ENCODE measurements at regions of chr1 and their contacts with region 1.

Region 1: GRCh38 chr1:111769517-111770146 is 13.9 kb downstream of the DDX20 start:
- DNase-seq: peak; percentile 12 to 45
- ATAC-seq: peak; percentile 98
- H3K4me3 ChIP-seq: peak overlapping the region in 1 of 4 donors; percentile 1
- H3K27ac ChIP-seq: peak overlapping the region; percentile 69 to 81 (median 72)
- H3K4me1 ChIP-seq: peaks cover 4 to 7% of the 10 kb centered on the region in 2 donors
- H3K27me3 ChIP-seq: no peaks in the 10 kb centered on the region
- CTCF ChIP-seq: peak; percentile 86 to 95 (median 87)
- POLR2A ChIP-seq: no peak

Region 2: DNA sequence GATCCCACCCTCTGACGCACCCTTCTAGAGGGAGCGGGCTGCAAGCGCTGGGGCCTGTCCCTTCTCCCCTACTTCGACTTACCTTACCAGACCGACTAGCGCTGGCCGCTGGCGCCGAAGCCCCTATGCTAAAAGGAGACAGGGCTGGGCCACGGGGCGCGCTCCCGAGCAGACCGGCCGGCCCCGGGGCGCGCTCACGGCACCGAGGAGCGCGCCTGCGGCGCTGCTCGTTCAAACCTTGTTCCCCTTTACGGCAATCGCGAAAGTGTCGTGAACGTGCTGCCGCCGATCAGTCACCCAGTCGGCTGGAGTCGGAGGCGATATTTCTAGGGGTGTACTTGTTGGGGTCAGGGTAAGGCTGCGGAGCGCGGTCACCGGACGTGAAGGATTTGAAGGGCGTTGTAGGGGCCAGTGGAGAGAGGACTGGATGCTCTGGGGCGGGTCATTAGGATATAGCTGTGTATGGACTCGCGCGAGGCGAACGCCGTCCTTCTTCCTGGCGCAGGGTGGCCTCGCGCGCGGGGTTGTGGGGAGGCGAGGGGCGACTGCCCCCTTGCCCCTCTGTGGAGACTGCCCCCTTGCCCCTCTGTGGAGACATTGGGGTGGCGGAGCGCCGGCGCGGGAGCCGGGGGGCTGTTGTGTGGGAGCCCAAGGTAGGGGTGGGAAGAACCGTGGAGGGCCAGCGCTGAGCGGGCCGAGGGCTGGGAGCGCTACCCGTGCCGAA is 629.5 kb before region 1 on chr1 and contains the starts of genes CEPT1 and DRAM2:
- in situ Hi-C with region 1: loop called in 2 of 4 experiments (anchors 25 kb)
- intact Hi-C with region 1: loop called (anchors 10 kb)
- DNase-seq: peak; percentile 94
- ATAC-seq: peak; percentile 93 to 96
- H3K4me3 ChIP-seq: peak within 1 kb of the TSS; percentile 92 to 99 (median 96)
- H3K27ac ChIP-seq: peak within 1 kb of the TSS; percentile 94 to 98 (median 96)
- H3K4me1 ChIP-seq: peaks cover 28 to 42% of the 10 kb centered on the region in 2 donors
- H3K27me3 ChIP-seq: no peaks in the 10 kb centered on the region
- CTCF ChIP-seq: no peak
- POLR2A ChIP-seq: peak; percentile 58 to 69
- total RNA-seq, gene CEPT1: 8.2 to 14.8 (median 10.6) TPM
- total RNA-seq, gene DRAM2: 28.9 to 47.1 (median 36.7) TPM

Region 3: GRCh38 chr1:111222308-111223125 is 547.1 kb before region 1 on chr1:
- in situ Hi-C with region 1: loop called in 2 of 4 experiments (anchors 10 kb)
- intact Hi-C with region 1: loop called (anchors 1 kb)
- DNase-seq: peak in 1 of 2 donors; percentile 41
- ATAC-seq: peak in 1 of 2 donors; percentile 62
- H3K4me3 ChIP-seq: no peak overlapping the region
- H3K27ac ChIP-seq: no peak overlapping the region
- H3K4me1 ChIP-seq: no peaks in the 10 kb centered on the region
- H3K27me3 ChIP-seq: no peaks in the 10 kb centered on the region
- CTCF ChIP-seq: peak; percentile 50 to 79 (median 74)
- POLR2A ChIP-seq: no peak

Region 4: GRCh38 chr1:111481387-111482221 is 288.0 kb before region 1 on chr1:
- in situ Hi-C with region 1: loop called (anchors 5 to 10 kb)
- intact Hi-C with region 1: loop called (anchors 2 kb)
- DNase-seq: peak; percentile 71 to 75
- ATAC-seq: peak; percentile 94 to 95
- H3K4me3 ChIP-seq: no peak overlapping the region
- H3K27ac ChIP-seq: peak overlapping the region; percentile 15 to 52 (median 27)
- H3K4me1 ChIP-seq: peaks cover 8 to 12% of the 10 kb centered on the region in 2 donors
- H3K27me3 ChIP-seq: no peaks in the 10 kb centered on the region
- CTCF ChIP-seq: peak; percentile 58 to 72 (median 68)
- POLR2A ChIP-seq: no peak

Region 5: DNA sequence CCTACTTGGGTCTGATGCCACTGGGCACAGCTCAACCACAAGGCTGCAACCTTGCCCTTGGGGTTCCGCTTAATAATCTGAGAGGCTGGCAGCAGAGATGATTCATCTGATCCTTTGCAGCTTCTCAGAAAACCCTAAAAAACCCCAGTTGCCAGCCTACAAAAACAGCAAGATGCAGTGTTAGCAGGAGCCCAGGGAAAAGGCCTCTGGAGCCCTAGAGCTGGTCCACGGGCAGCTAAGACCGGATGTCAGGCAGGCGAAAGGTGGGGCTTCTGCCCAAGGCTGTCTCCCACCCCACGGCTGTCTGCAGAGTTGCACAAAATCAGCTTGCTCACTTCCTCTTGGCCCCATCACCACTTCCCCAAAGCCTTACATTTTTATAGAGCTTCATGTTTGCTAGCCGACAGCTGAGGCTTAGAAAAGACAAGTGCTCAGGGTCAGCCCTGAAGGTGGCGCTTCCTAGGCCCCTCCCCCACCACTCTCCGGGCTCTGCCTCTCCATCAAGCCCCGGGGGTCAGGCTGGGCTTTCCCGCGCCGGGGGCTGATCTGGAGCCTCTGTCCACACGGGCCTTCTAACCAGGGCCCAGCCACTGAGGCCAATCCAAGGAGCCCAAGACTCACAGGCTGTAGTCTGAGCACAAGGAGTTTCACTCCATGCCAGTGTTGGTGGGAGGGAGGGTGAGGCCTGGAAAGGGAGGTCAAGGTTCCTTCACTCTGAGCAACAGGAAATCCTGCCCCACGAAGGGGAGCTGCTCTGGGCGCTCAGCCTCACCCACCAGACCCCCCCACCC is 262.0 kb before region 1 on chr1:
- in situ Hi-C with region 1: no loop called
- intact Hi-C with region 1: loop called (anchors 1 kb)
- DNase-seq: peak; percentile 47 to 68
- ATAC-seq: peak; percentile 78 to 86
- H3K4me3 ChIP-seq: peak overlapping the region; percentile 47 to 55 (median 48)
- H3K27ac ChIP-seq: peak overlapping the region; percentile 85 to 92 (median 90)
- H3K4me1 ChIP-seq: peaks cover 17 to 35% of the 10 kb centered on the region in 2 donors
- H3K27me3 ChIP-seq: no peaks in the 10 kb centered on the region
- CTCF ChIP-seq: no peak
- POLR2A ChIP-seq: peak in 1 of 2 donors; percentile 10

Region 6: GRCh38 chr1:111656086-111657017 is 113.3 kb before region 1 on chr1:
- in situ Hi-C with region 1: loop called in 1 of 4 experiments (anchors 10 kb)
- intact Hi-C with region 1: loop called (anchors 5 kb)
- DNase-seq: peak in 1 of 2 donors; percentile 28
- ATAC-seq: peak; percentile 73 to 81
- H3K4me3 ChIP-seq: no peak overlapping the region
- H3K27ac ChIP-seq: peak overlapping the region; percentile 32 to 47 (median 41)
- H3K4me1 ChIP-seq: peaks cover 28 to 39% of the 10 kb centered on the region in 2 donors
- H3K27me3 ChIP-seq: no peaks in the 10 kb centered on the region
- CTCF ChIP-seq: peak; percentile 58 to 72 (median 68)
- POLR2A ChIP-seq: no peak

Region 7: GRCh38 chr1:111943992-111944749 is 174.5 kb after region 1 on chr1:
- in situ Hi-C with region 1: no loop called
- intact Hi-C with region 1: no loop called
- DNase-seq: peak in 1 of 2 donors; percentile 66
- ATAC-seq: peak in 1 of 2 donors; percentile 65
- H3K4me3 ChIP-seq: no peak overlapping the region
- H3K27ac ChIP-seq: peak overlapping the region; percentile 36 to 60 (median 53)
- H3K4me1 ChIP-seq: peaks cover 31 to 36% of the 10 kb centered on the region in 2 donors
- H3K27me3 ChIP-seq: no peaks in the 10 kb centered on the region
- CTCF ChIP-seq: no peak
- POLR2A ChIP-seq: no peak